ENCODE measurements at regions of chr11 and their contacts with region 1.

Region 1: GRCh38 chr11:73335204-73335923 is 27.3 kb downstream of the ARHGEF17 start:
- DNase-seq: peak; percentile 78 to 93 (median 90)
- H3K4me3 ChIP-seq: no peak overlapping the region
- H3K27ac ChIP-seq: peak overlapping the region; percentile 62 to 68
- H3K4me1 ChIP-seq: peaks cover 36% of the 10 kb centered on the region
- H3K27me3 ChIP-seq: no peaks in the 10 kb centered on the region
- CTCF ChIP-seq: peak; percentile 88 to 97 (median 90)
- EP300 ChIP-seq: no peak
- POLR2A ChIP-seq: no peak

Region 2: GRCh38 chr11:73295231-73295995 is 40.0 kb before region 1 on chr11:
- intact Hi-C with region 1: loop called in 2 of 4 experiments (anchors 2 to 5 kb)
- DNase-seq: peak; percentile 38 to 74 (median 68)
- H3K4me3 ChIP-seq: no peak overlapping the region
- H3K27ac ChIP-seq: no peak overlapping the region
- H3K4me1 ChIP-seq: no peaks in the 10 kb centered on the region
- H3K27me3 ChIP-seq: no peaks in the 10 kb centered on the region
- CTCF ChIP-seq: peak; percentile 33 to 56 (median 50)
- EP300 ChIP-seq: no peak
- POLR2A ChIP-seq: no peak

Region 3: GRCh38 chr11:73307323-73308002 is 27.9 kb before region 1 on chr11:
- intact Hi-C with region 1: loop called in 3 of 4 experiments (anchors 1 to 2 kb)
- DNase-seq: peak; percentile 98 to 100 (median 99)
- H3K4me3 ChIP-seq: peak overlapping the region; percentile 86
- H3K27ac ChIP-seq: peak overlapping the region; percentile 96
- H3K4me1 ChIP-seq: peaks cover 29% of the 10 kb centered on the region
- H3K27me3 ChIP-seq: no peaks in the 10 kb centered on the region
- CTCF ChIP-seq: peak; percentile 82 to 97 (median 94)
- EP300 ChIP-seq: no peak
- POLR2A ChIP-seq: peak; percentile 51

Region 4: GRCh38 chr11:74748211-74749127 is 1413.1 kb after region 1 on chr11 and contains the start of gene RNF169:
- intact Hi-C with region 1: loop called in 1 of 4 experiments (anchors 10 kb)
- DNase-seq: peak; percentile 90 to 95 (median 91)
- H3K4me3 ChIP-seq: peak within 1 kb of the TSS; percentile 90
- H3K27ac ChIP-seq: peak within 1 kb of the TSS; percentile 94 to 98
- H3K4me1 ChIP-seq: peaks cover 5% of the 10 kb centered on the region
- H3K27me3 ChIP-seq: no peaks in the 10 kb centered on the region
- CTCF ChIP-seq: no peak
- EP300 ChIP-seq: no peak
- POLR2A ChIP-seq: peak; percentile 65
- total RNA-seq, gene RNF169: 19.0 to 26.1 (median 23.0) TPM

Measured in ovary (tissue), 10 donors.